WTC11 (cell line): ENCODE measurements at regions of chr17 and their contacts with region 1.

Region 1: DNA sequence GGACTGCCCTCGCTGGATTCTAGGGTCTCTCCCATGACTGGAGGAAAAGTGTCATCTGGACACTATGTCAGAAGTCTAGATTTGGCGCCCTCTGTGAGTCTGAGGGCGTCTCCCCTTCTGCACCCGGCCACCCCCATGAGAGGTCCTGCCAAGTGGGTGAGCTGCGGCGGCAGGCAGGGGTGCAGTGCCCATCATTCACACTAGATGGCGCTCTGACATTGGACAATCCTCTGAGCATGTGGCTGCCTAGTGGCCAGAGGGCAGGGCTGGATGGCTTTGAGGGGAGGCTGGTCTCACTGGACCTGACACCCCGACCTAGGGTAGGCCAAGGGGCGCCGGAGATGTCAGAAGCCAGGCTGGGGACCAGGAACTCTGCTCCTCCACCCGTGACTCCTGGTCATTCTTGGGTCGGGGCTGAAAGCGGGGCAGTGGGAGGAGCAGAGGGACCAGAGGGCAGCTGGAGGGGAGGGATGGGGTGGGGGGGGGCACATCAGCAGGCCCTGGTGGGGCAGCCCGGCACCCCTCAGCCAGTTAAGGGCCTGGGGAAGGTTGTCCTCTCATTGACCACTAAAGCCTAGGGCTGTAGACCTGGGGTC is 28.0 kb downstream of the MRM1 start:
- DNase-seq: peak; percentile 90
- ATAC-seq: peak; percentile 70
- H3K4me3 Mint-ChIP-seq: no peak overlapping the region
- H3K27ac Mint-ChIP-seq: no peak overlapping the region
- H3K4me1 Mint-ChIP-seq: peaks cover 35% of the 10 kb centered on the region
- H3K27me3 Mint-ChIP-seq: peaks cover 18% of the 10 kb centered on the region
- CTCF ChIP-seq: peak; percentile 100

Region 2: DNA sequence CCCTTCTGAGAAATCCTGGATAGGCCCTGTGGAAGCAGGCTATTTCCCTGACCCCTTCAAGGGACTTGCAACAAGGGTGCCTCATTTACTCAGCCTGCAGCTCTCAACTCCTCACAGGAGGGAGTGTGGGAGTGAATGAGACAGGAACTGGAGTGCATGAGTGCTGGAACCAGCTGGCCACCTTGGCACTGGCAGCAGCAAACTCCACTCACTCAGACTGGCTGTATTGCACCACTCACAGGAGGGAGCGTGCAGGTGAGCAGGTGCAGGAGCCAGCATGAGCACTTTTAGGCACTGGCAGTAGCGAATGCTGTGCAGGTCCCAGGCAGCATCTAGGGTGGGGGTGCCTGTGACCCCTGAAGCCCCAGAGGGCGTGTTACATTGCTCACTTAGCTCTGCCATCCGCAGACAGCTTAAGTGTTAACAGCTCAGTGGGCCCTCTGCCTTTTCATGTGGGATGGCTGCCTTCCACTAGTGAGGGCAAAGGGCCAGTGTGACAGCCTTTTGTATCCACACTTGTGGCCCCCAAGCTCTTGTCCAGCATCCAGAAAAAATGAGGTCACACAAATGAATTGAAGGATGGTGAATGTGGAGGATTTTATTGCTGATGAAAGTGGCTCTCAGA is 153.9 kb before region 1 on chr17:
- CTCF ChIA-PET with region 1: no interaction called
- POLR2A ChIA-PET with region 1: no interaction called
- DNase-seq: no peak
- ATAC-seq: no peak
- H3K4me3 Mint-ChIP-seq: no peak overlapping the region
- H3K27ac Mint-ChIP-seq: no peak overlapping the region
- H3K4me1 Mint-ChIP-seq: no peaks in the 10 kb centered on the region
- H3K27me3 Mint-ChIP-seq: peaks cover 15% of the 10 kb centered on the region
- CTCF ChIP-seq: no peak

Region 3: GRCh38 chr17:36611345-36612072 is 17.8 kb before region 1 on chr17:
- CTCF ChIA-PET with region 1: interaction called, 60 read pairs
- POLR2A ChIA-PET with region 1: no interaction called
- DNase-seq: no peak
- ATAC-seq: no peak
- H3K4me3 Mint-ChIP-seq: no peak overlapping the region
- H3K27ac Mint-ChIP-seq: 0 out of 2 replicates have a peak overlapping the region, but pooled peaks have one; percentile 45
- H3K4me1 Mint-ChIP-seq: peaks cover 44% of the 10 kb centered on the region
- H3K27me3 Mint-ChIP-seq: no peaks in the 10 kb centered on the region
- CTCF ChIP-seq: no peak

Region 4: DNA sequence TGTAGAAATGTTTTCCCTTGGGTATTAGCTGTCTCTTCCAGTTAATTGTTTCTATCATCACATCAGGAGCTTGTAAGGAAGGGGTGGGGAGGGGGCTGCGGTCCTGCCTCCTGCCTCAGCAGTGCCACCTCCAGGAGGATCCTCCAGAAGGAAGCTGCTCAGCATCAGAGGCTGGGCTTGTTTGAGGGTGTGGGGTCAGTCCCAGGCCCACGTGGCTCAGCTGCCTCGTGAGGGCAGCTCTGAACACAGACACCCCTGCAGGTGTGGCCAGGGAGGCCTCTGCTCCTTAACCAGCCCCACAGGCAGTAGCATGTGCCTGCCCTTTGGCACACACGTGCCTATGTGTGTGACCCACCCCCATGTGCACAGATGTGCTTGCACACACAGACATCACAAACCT is 18.3 kb after region 1 on chr17:
- CTCF ChIA-PET with region 1: interaction called, 11 read pairs
- POLR2A ChIA-PET with region 1: no interaction called
- DNase-seq: peak; percentile 47
- ATAC-seq: peak; percentile 84
- H3K4me3 Mint-ChIP-seq: no peak overlapping the region
- H3K27ac Mint-ChIP-seq: no peak overlapping the region
- H3K4me1 Mint-ChIP-seq: peaks cover 26% of the 10 kb centered on the region
- H3K27me3 Mint-ChIP-seq: peaks cover 27% of the 10 kb centered on the region
- CTCF ChIP-seq: no peak

Region 5: GRCh38 chr17:36705874-36706731 is 76.8 kb after region 1 on chr17:
- CTCF ChIA-PET with region 1: interaction called, 14 read pairs
- POLR2A ChIA-PET with region 1: no interaction called
- DNase-seq: peak; percentile 70
- ATAC-seq: peak; percentile 80
- H3K4me3 Mint-ChIP-seq: no peak overlapping the region
- H3K27ac Mint-ChIP-seq: no peak overlapping the region
- H3K4me1 Mint-ChIP-seq: 0 out of 2 replicates have a peak, but pooled peaks cover 3% of the 10 kb centered on the region
- H3K27me3 Mint-ChIP-seq: peaks cover 44% of the 10 kb centered on the region
- CTCF ChIP-seq: peak; percentile 70

Region 6: DNA sequence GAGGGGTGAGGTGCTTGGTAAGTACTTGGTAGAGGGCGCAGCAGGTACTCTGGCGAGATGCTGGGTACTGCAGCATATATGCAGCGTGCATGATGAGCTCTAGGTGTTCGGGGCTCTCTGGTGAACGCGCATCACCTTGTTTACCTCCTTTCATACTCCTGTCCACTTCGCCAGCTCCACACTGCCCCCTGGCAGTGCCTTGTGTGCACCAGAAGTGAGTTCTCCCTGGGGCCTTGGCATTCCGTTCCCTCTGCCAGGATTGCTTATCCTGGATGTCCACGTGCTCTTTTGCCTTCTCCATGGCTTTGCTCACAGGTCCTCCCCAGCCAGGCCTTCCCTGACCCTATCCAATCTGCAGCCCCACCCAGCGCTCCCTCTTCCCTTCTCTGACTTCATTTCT is 126.2 kb after region 1 on chr17:
- CTCF ChIA-PET with region 1: interaction called, 16 read pairs
- POLR2A ChIA-PET with region 1: no interaction called
- DNase-seq: peak; percentile 77
- ATAC-seq: peak; percentile 88
- H3K4me3 Mint-ChIP-seq: no peak overlapping the region
- H3K27ac Mint-ChIP-seq: no peak overlapping the region
- H3K4me1 Mint-ChIP-seq: peaks cover 12% of the 10 kb centered on the region
- H3K27me3 Mint-ChIP-seq: no peaks in the 10 kb centered on the region; the same call in 1 of the 2 replicates
- CTCF ChIP-seq: peak; percentile 33